MCF 10A (cell line): ENCODE measurements at regions of chr5 and their contacts with region 1.

Region 1: GRCh38 chr5:42656651-42657015 is 100.0 kb upstream of the CCDC152 start:
- DNase-seq: peak; percentile 18
- H3K4me3 Mint-ChIP-seq: peak overlapping the region; percentile 66
- H3K27ac Mint-ChIP-seq: peak overlapping the region; percentile 25
- H3K4me1 Mint-ChIP-seq: peaks cover 15% of the 10 kb centered on the region
- H3K27me3 Mint-ChIP-seq: no peaks in the 10 kb centered on the region
- CTCF ChIP-seq: peak; percentile 16

Region 2: GRCh38 chr5:42005561-42006153 is 651.0 kb before region 1 on chr5:
- CTCF ChIA-PET with region 1: interaction called, 9 read pairs
- POLR2A ChIA-PET with region 1: no interaction called
- intact Hi-C with region 1: loop called (anchors 1 kb)
- DNase-seq: peak; percentile 33
- H3K4me3 Mint-ChIP-seq: no peak overlapping the region
- H3K27ac Mint-ChIP-seq: no peak overlapping the region
- H3K4me1 Mint-ChIP-seq: no peaks in the 10 kb centered on the region
- H3K27me3 Mint-ChIP-seq: no peaks in the 10 kb centered on the region
- CTCF ChIP-seq: peak; percentile 69

Region 3: GRCh38 chr5:42057254-42057690 is 599.4 kb before region 1 on chr5:
- CTCF ChIA-PET with region 1: interaction called, 22 read pairs
- POLR2A ChIA-PET with region 1: no interaction called
- intact Hi-C with region 1: loop called (anchors 5 kb)
- DNase-seq: peak; percentile 67
- H3K4me3 Mint-ChIP-seq: no peak overlapping the region
- H3K27ac Mint-ChIP-seq: no peak overlapping the region
- H3K4me1 Mint-ChIP-seq: no peaks in the 10 kb centered on the region
- H3K27me3 Mint-ChIP-seq: no peaks in the 10 kb centered on the region
- CTCF ChIP-seq: peak; percentile 76

Region 4: GRCh38 chr5:42514754-42515153 is 141.9 kb before region 1 on chr5:
- CTCF ChIA-PET with region 1: interaction called, 62 read pairs
- POLR2A ChIA-PET with region 1: interaction called, 4 read pairs
- intact Hi-C with region 1: loop called (anchors 5 kb)
- DNase-seq: peak; percentile 29
- H3K4me3 Mint-ChIP-seq: no peak overlapping the region
- H3K27ac Mint-ChIP-seq: no peak overlapping the region
- H3K4me1 Mint-ChIP-seq: peaks cover 5% of the 10 kb centered on the region
- H3K27me3 Mint-ChIP-seq: no peaks in the 10 kb centered on the region
- CTCF ChIP-seq: peak; percentile 11

Region 5: DNA sequence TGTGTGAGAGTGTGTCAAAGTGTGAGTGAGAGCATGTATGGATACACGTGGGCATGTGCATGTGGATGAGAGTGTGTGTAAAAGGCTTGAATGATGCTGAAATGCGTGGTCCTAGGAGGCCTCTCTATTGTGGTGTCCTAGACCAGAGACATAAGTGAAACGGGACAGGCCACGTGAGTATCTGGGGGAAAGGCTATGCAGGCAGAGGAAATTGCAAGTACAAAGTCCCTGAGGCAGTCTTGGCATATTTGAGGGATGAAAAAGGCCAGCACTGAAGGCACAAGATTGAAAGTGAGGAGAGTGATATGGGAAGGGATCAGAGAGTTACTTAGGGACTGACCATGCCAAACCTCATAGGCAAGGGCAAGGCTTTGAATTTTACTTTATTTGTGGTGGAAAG is 32.8 kb after region 1 on chr5:
- CTCF ChIA-PET with region 1: no interaction called
- POLR2A ChIA-PET with region 1: no interaction called
- intact Hi-C with region 1: no loop called
- DNase-seq: peak; percentile 20
- H3K4me3 Mint-ChIP-seq: no peak overlapping the region
- H3K27ac Mint-ChIP-seq: no peak overlapping the region
- H3K4me1 Mint-ChIP-seq: no peaks in the 10 kb centered on the region
- H3K27me3 Mint-ChIP-seq: no peaks in the 10 kb centered on the region
- CTCF ChIP-seq: no peak

Region 6: DNA sequence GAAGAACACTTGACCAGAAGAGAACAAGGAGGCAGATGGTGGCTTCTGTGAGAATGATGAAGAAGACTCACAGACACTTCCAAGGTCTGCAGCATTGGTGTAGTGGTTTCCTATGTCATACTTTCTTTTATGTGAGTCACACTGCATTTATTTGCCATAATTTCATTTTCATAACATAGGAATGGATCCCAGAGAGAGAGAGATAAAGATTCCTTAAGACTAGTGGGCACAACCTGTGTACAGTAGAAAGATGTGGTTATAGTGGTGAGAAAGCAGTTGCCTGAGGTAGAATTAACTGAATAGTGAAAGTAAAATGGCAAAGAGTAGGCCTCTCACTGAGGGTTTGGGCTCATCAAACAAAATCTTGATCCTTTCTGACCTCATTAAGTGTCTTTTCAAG is 92.4 kb after region 1 on chr5:
- CTCF ChIA-PET with region 1: no interaction called
- POLR2A ChIA-PET with region 1: no interaction called
- intact Hi-C with region 1: no loop called
- DNase-seq: peak; percentile 4
- H3K4me3 Mint-ChIP-seq: no peak overlapping the region
- H3K27ac Mint-ChIP-seq: no peak overlapping the region
- H3K4me1 Mint-ChIP-seq: peaks cover 5% of the 10 kb centered on the region
- H3K27me3 Mint-ChIP-seq: no peaks in the 10 kb centered on the region
- CTCF ChIP-seq: no peak

Region 7: GRCh38 chr5:42767491-42768105 is 111.0 kb after region 1 on chr5:
- CTCF ChIA-PET with region 1: interaction called, 12 read pairs
- POLR2A ChIA-PET with region 1: interaction called, 3 read pairs
- intact Hi-C with region 1: no loop called
- DNase-seq: peak; percentile 58
- H3K4me3 Mint-ChIP-seq: no peak overlapping the region
- H3K27ac Mint-ChIP-seq: no peak overlapping the region
- H3K4me1 Mint-ChIP-seq: peaks cover 1% of the 10 kb centered on the region
- H3K27me3 Mint-ChIP-seq: no peaks in the 10 kb centered on the region
- CTCF ChIP-seq: peak; percentile 64